ENCODE measurements at regions of chr3 and their contacts with region 1.

Region 1: DNA sequence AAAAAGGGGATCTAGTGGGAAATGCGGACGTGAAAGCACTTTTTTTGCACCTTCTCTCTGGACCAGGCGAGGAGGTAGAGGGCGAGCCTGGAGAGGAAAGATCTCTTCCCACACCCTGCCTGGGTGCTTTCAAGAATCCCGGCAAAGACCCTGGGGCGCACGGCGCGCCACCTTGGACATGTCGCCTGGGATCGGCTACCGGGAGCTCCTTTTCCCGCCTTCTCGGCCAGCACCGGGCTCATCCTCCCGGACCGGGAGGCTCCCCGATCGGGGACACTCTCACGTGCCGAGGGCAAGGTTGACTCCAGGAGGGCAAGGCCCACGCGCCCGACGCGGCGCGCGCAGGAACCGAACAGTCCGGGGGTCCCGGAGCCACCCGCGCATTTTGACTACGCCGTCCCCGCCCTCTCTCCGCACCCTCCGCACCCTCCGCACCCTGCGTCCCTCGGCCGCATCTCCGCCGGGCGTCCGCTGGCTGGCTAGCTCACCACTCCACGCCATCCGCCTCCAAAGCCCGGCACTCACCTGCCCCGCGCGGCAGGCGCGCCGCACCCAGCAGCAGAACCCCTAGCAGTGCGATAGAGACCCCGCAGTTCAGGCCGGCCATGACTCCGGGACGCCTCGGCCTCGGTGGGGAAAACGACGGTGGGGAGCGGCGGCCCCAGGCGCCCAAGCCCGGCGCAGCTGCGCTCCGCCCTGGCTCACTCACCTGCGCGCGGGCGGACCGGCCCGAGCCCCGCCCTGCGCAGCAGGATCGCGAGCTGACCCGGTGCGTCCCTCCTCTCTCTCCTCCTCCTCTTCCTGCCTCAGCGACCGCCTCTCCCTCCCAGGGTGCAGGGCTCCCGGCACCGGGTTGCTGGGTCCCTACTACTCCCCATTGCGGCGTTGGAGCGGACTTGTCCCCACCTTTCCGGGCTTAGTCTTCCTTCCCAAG is at the start of gene CDCP1:
- DNase-seq: peak in 1 of 14 experiments; percentile 8
- ATAC-seq: peak; percentile 46
- H3K4me3 ChIP-seq: peak within 1 kb of the TSS; percentile 45
- H3K4me3 Mint-ChIP-seq: peak within 1 kb of the TSS; percentile 95
- H3K27ac ChIP-seq: no peak within 1 kb of the TSS
- H3K27ac Mint-ChIP-seq: peak within 1 kb of the TSS; percentile 38
- H3K4me1 ChIP-seq: peaks cover 12% of the 10 kb centered on the region
- H3K4me1 Mint-ChIP-seq: peaks cover 25% of the 10 kb centered on the region
- H3K27me3 ChIP-seq: peaks cover 32 to 47% of the 10 kb centered on the region in 2 experiments
- H3K27me3 Mint-ChIP-seq: peaks cover 51% of the 10 kb centered on the region
- CTCF ChIP-seq: no peak
- total RNA-seq, gene CDCP1: 1.7 to 1.8 TPM

Region 2: DNA sequence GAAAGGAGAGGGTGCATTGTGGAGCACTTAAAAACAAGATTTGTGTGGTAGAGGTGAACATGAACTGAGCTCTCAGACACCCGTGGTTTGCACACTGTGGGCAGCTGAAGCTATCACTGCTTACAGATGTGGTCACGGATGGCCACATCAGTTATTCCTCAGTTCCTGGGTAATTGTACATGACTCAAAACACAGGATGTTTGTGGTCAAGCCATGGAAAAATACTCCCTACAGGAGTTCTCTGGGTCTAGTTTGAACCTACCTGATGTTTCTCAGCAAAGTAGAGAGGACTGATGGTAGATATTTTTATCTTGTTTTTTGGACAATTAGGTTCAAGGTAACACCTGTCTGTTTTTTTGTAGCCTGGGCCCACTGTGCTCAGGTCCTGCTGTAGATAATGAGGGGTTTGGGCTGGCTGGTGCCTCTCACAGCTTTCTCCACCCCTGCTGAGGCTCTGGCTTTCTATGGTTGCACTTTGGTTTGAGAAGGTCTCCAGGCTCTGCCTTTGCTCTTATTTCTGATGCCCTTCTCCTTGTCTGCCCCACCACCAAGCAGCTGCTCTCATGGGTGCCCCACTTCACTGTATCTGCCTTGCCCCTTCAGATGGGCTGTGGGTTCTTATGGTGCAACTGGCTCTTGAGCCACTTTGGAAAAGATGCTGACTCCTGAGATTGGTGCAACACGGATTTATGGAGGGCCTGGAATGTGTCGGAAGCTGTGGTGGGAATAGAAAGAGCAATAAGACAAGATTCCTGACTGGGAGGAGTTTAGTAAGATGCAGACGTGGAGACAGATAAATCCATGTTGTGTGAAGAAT is 39.9 kb before region 1 on chr3:
- CTCF ChIA-PET with region 1: no interaction called
- POLR2A ChIA-PET with region 1: no interaction called
- intact Hi-C with region 1: loop called (anchors 5 kb)
- DNase-seq: peak; percentile 20 to 78 (median 52)
- ATAC-seq: peak; percentile 67
- H3K4me3 ChIP-seq: no peak overlapping the region
- H3K4me3 Mint-ChIP-seq: peak overlapping the region; percentile 47
- H3K27ac ChIP-seq: no peak overlapping the region
- H3K27ac Mint-ChIP-seq: peak overlapping the region; percentile 59
- H3K4me1 ChIP-seq: peaks cover 65% of the 10 kb centered on the region
- H3K4me1 Mint-ChIP-seq: peaks cover 78% of the 10 kb centered on the region
- H3K27me3 ChIP-seq: peaks cover 0 to 3% of the 10 kb centered on the region in 2 experiments
- H3K27me3 Mint-ChIP-seq: peaks cover 9% of the 10 kb centered on the region
- CTCF ChIP-seq: no peak

Measured in CD4-positive, alpha-beta T cell (primary cell).